ENCODE measurements at regions of chr1 and their contacts with region 1.

Region 1: GRCh38 chr1:198088360-198089071 is 68.3 kb upstream of the NEK7 start:
- DNase-seq: peak; percentile 74
- H3K4me3 ChIP-seq: peak overlapping the region; percentile 61
- H3K27ac ChIP-seq: peak overlapping the region; percentile 68
- H3K4me1 ChIP-seq: peaks cover 29% of the 10 kb centered on the region
- H3K27me3 ChIP-seq: no peaks in the 10 kb centered on the region

Region 2: DNA sequence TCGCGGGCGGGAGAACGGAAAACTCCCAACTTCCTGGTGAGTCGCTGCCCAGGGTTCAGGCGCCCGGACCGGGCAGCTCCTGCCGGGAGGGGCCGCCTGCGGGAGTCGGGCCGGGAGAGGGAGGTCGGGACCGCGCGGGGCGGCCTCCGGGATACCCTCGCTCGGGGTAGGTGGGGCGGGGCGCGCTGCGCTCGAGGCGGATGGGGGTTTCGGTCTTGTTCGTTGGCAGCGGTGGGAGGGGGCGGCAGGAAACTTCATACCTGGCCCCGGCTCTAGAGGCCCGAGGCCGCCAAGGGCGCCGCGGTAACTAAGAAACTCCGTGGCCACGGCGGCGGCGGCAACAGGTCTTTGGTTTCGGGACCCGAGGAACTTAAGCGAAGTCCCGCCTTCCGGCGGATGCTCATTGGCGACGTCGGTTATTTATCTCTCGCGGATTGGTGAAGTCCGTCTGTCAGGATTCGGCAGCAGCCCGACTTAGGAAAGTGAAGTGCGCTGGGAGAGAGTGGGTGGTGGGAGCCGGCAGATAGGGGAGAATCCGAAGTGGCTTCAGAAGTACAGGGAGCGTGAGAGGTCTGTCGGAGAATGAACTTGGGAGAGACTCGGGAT is 68.8 kb after region 1 on chr1:
- in situ Hi-C with region 1: loop called (anchors 10 kb)
- DNase-seq: peak; percentile 96
- H3K4me3 ChIP-seq: peak overlapping the region; percentile 88
- H3K27ac ChIP-seq: peak overlapping the region; percentile 74
- H3K4me1 ChIP-seq: peaks cover 52% of the 10 kb centered on the region
- H3K27me3 ChIP-seq: no peaks in the 10 kb centered on the region

Region 3: GRCh38 chr1:198187973-198188588 is 99.6 kb after region 1 on chr1:
- in situ Hi-C with region 1: no loop called
- DNase-seq: no peak
- H3K4me3 ChIP-seq: no peak overlapping the region
- H3K27ac ChIP-seq: peak overlapping the region; percentile 8; the same call in 1 of the 2 replicates
- H3K4me1 ChIP-seq: peaks cover 81% of the 10 kb centered on the region
- H3K27me3 ChIP-seq: no peaks in the 10 kb centered on the region